ENCODE measurements at regions of chr7 and their contacts with region 1.

Region 1: DNA sequence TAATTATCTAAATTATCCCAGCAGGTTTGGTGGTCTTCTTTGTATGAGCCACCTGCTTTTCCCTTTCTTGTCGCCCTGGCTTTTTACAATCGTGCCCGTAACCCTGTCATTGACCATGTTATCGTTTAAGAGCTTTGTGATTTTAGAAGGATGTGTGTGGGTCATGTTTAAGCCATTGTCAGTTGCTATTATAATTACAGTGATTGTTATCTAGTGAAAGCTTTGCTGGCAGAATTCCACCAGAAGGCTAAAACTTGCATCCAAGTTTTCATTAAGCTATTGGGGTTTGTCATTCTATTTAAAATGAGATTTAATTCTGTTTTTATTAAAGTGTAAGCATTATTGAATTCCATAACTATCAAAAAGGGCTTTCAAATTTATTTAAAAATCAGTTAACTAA is 354.2 kb upstream of the TMEM229A start:
- DNase-seq: no peak
- H3K27ac ChIP-seq: no peak overlapping the region
- CTCF ChIP-seq: no peak

Region 2: DNA sequence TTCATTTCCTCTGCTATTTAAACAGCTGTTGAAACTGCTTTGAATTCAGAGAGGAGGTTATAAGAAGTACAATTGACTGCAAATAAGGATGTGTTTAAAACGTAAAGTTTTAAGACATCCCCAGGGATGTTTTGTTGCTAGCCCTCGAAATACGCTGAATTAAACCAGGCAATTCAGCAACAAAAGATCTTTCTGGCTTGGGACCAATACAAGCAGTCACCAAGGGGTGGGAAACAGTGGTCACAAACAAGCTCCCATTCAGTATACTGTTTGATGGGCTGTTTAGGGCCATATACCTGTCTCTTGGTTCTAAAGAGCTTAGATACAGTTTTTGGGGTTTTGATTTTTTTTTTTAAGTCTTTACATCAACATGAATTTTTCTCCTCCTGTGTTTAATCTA is 988.9 kb after region 1 on chr7:
- CTCF ChIA-PET with region 1: interaction called, 10 read pairs
- POLR2A ChIA-PET with region 1: no interaction called
- DNase-seq: no peak
- H3K27ac ChIP-seq: no peak overlapping the region
- CTCF ChIP-seq: no peak